SK-N-SH (cell line): ENCODE measurements at regions of chr15 and their contacts with region 1.

Region 1: GRCh38 chr15:70875001-70875782 is 17.0 kb downstream of the THAP10 start:
- DNase-seq: peak; percentile 45
- H3K4me3 ChIP-seq: no peak overlapping the region
- H3K27ac ChIP-seq: no peak overlapping the region
- H3K4me1 ChIP-seq: peaks cover 3 to 20% of the 10 kb centered on the region in 2 experiments
- H3K27me3 ChIP-seq: no peaks in the 10 kb centered on the region
- CTCF ChIP-seq: peak; percentile 79
- EP300 ChIP-seq: no peak
- RAD21 ChIP-seq: peak; percentile 85

Region 2: DNA sequence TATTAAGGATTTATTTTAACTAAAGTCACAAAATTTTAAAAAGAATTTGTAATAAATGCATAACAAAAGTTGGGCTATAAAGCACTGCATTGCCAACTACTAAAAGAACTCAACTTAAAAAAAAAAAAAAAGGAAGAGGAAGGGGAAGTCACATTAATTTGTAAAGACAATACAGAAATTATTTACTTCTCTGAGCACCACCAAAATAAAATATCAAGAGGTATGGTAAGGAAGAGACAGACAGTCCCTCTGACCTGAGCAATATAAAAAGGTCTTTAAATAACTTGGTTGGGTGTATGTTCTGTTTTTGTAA is 195.3 kb before region 1 on chr15:
- CTCF ChIA-PET with region 1: interaction called, 14 read pairs
- POLR2A ChIA-PET with region 1: no interaction called
- DNase-seq: no peak
- H3K4me3 ChIP-seq: no peak overlapping the region
- H3K27ac ChIP-seq: peak overlapping the region in 1 of 2 experiments; percentile 11; a peak in 1 of 4 replicates
- H3K4me1 ChIP-seq: peaks cover 0 to 4% of the 10 kb centered on the region in 2 experiments; a peak in 1 of 4 replicates
- H3K27me3 ChIP-seq: no peaks in the 10 kb centered on the region
- CTCF ChIP-seq: no peak
- EP300 ChIP-seq: no peak
- RAD21 ChIP-seq: no peak

Region 3: GRCh38 chr15:70826634-70827033 is 48.6 kb before region 1 on chr15:
- CTCF ChIA-PET with region 1: interaction called, 79 read pairs
- POLR2A ChIA-PET with region 1: no interaction called
- DNase-seq: no peak
- H3K4me3 ChIP-seq: no peak overlapping the region
- H3K27ac ChIP-seq: peak overlapping the region in 1 of 2 experiments; percentile 56; a peak in 2 of 4 replicates
- H3K4me1 ChIP-seq: peaks cover 0 to 23% of the 10 kb centered on the region in 2 experiments; a peak in 2 of 4 replicates
- H3K27me3 ChIP-seq: no peaks in the 10 kb centered on the region
- CTCF ChIP-seq: no peak
- EP300 ChIP-seq: no peak
- RAD21 ChIP-seq: no peak

Region 4: DNA sequence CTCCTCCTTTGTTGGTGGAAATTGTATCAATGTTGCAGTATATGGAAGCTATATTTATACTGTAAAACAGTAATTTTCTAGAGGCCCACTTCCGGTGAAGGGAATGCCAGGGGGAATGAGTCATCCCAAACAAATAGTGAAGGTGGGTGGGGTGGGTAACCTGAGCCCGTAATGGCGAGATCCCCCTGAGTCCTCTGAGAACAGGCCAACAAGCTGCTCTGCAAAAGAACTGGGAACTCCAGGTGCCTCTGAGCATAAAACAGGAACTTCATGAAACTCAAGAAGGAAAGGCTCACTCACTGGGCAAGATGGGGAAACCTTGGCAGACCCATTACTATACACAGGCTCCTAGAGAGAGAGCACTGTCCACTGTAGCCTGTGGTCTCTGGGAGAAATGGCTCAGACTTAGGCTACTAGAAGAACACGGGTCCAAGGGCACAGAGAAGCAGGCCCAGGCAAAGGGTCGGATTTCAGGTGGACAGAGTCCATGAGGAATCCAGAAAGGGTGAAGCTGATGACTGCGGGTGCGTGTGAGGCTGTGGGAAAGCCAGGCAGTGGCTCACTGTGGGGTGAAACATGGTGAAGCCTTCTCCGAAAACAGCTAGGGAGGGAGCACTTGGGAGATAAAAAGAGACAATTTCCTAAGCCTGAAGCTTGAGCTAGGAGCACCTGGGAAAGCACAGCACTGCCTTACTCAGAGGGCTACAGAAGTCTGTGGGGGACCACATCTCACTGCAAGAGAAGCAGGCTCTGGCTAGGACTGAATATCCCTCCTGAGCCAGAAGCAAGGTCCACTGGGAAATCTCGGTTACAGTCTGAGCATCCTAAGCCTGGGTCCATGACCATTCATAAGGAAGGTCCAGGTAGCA is 41.1 kb before region 1 on chr15:
- CTCF ChIA-PET with region 1: interaction called, 15 read pairs
- POLR2A ChIA-PET with region 1: no interaction called
- DNase-seq: no peak
- H3K4me3 ChIP-seq: no peak overlapping the region; a peak in 1 of 4 replicates
- H3K27ac ChIP-seq: peak overlapping the region; percentile 77 to 91; a peak in 3 of 4 replicates
- H3K4me1 ChIP-seq: peaks cover 4 to 23% of the 10 kb centered on the region in 2 experiments
- H3K27me3 ChIP-seq: no peaks in the 10 kb centered on the region
- CTCF ChIP-seq: no peak
- EP300 ChIP-seq: peak in 1 of 2 experiments; percentile 63; a peak in 1 of 4 replicates
- RAD21 ChIP-seq: no peak

Region 5: GRCh38 chr15:70853821-70854666 is 21.1 kb before region 1 on chr15 and contains the start of gene LARP6:
- CTCF ChIA-PET with region 1: interaction called, 25 read pairs
- POLR2A ChIA-PET with region 1: interaction called, 21 read pairs
- DNase-seq: peak; percentile 96
- H3K4me3 ChIP-seq: peak within 1 kb of the TSS; percentile 81 to 86
- H3K27ac ChIP-seq: peak within 1 kb of the TSS; percentile 86 to 97
- H3K4me1 ChIP-seq: peaks cover 16 to 24% of the 10 kb centered on the region in 2 experiments
- H3K27me3 ChIP-seq: no peaks in the 10 kb centered on the region
- CTCF ChIP-seq: no peak
- EP300 ChIP-seq: peak in 1 of 2 experiments; percentile 55; a peak in 1 of 4 replicates
- RAD21 ChIP-seq: no peak
- polyA plus RNA-seq, gene LARP6: 193 and 236 TPM in 2 replicates